ENCODE measurements at regions of chr13 and their contacts with region 1.

Region 1: DNA sequence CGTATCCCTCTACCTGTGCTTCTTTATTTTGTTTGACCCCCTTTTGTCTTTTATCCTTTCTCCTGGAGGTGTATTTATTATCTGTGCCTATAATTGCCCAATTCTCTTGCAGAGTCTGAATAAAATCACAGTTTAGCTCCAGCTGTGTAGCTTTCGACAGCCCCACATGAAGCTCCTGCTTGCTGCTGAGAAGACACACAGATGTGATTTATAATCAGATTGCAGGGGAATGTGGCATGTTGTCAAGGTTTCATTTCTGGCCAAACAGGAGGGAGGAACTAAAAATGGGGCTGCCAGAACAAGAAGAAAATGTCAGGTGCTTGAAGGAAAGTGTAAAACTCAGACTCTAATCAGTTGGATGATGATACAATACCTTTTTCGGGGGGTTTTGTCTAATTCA is 22.7 kb downstream of the CCNA1 start:
- DNase-seq: no peak
- H3K4me3 ChIP-seq: no peak overlapping the region
- H3K27ac ChIP-seq: no peak overlapping the region
- H3K4me1 ChIP-seq: no peaks in the 10 kb centered on the region
- H3K27me3 ChIP-seq: no peaks in the 10 kb centered on the region
- CTCF ChIP-seq: no peak
- POLR2A ChIP-seq: no peak

Region 2: DNA sequence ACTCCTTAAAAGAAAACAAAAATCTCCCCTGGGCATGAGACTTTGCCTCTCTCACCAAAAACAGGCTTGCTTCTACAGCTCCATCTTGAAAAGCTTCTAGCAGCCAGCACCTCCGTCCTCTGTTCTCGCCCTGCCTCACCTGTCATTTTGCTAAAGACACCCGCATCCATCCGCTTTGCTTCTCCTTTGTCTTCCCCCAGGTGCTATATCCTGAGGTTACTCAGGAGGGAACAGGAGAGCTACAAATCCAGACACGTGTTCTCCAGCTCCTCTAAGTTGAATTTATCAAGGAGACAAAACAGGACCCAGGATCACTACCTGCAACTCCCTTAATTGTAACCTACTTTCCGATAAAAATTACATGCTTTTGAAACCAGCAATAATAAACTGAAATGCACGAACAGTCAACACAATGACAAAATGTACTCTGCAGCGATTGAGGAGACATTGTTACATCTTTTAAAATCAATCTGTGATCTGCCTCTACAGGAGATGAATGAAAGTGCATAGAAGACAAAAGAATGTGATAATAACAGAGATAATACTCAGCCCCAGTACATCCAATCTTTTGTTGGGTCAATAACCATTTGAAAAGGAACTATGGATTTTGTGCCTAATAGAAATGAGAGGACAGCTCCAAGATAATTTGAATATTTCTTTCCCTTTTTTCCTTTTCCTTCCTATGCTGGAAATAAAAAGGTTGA is 545.0 kb before region 1 on chr13:
- intact Hi-C with region 1: no loop called
- DNase-seq: no peak
- H3K4me3 ChIP-seq: no peak overlapping the region
- H3K27ac ChIP-seq: no peak overlapping the region
- H3K4me1 ChIP-seq: no peaks in the 10 kb centered on the region
- H3K27me3 ChIP-seq: no peaks in the 10 kb centered on the region
- CTCF ChIP-seq: no peak
- POLR2A ChIP-seq: no peak

Region 3: DNA sequence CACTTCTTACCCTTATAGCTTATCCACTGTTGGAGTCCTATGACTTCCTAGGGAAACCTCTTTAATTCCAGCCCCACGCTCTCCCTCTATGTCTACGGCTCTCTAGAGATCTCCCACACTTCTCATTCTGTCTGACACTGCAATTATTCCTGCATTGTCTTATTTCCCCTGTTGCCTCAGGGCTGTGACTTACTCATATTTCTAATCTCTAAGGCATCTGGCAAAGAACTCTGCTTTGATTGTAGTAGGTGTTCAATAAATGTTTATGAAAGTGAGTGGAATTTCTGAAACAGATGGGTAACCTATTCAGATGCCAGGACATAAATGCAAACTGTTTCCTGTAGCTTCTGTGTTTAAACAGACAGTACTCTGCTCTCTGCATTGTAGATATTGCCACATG is 116.5 kb after region 1 on chr13:
- intact Hi-C with region 1: no loop called
- DNase-seq: no peak
- H3K4me3 ChIP-seq: no peak overlapping the region
- H3K27ac ChIP-seq: no peak overlapping the region
- H3K4me1 ChIP-seq: peaks cover 0 to 14% of the 10 kb centered on the region in 2 donors
- H3K27me3 ChIP-seq: no peaks in the 10 kb centered on the region
- CTCF ChIP-seq: no peak
- POLR2A ChIP-seq: no peak

Region 4: GRCh38 chr13:36736119-36736726 is 281.2 kb after region 1 on chr13:
- intact Hi-C with region 1: loop called (anchors 5 kb)
- DNase-seq: peak; percentile 49 to 63
- H3K4me3 ChIP-seq: no peak overlapping the region
- H3K27ac ChIP-seq: no peak overlapping the region
- H3K4me1 ChIP-seq: no peaks in the 10 kb centered on the region
- H3K27me3 ChIP-seq: no peaks in the 10 kb centered on the region
- CTCF ChIP-seq: peak; percentile 43 to 72 (median 66)
- POLR2A ChIP-seq: no peak

Region 5: DNA sequence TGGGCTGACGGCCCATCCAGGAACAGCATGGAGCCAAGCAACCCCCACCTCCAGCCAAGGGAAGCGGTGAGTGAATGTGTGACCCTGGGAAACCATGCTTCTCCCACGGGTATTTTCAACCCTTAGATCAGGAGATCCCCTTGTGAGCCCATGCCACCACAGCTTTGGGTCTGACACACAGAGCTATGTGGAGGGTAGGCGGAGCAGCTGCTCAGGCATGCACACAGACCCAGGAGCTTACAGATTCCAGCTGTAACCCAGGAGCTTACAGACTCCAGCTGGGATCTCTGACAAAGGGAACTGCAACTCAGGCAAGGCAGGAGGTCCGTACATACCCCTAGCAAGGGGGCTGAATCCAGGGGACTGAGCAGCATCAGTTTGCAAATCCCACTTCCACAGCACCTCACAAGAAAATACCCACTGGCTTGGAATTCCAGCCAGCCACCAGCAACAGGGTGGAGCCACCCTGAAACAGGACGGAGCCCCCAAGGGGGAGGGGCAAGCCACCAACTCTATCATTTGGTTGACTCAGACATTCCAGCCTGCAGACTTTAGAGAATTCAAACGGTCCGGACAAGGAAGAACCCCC is 323.2 kb after region 1 on chr13:
- intact Hi-C with region 1: no loop called
- DNase-seq: no peak
- H3K4me3 ChIP-seq: no peak overlapping the region
- H3K27ac ChIP-seq: no peak overlapping the region
- H3K4me1 ChIP-seq: no peaks in the 10 kb centered on the region
- H3K27me3 ChIP-seq: no peaks in the 10 kb centered on the region
- CTCF ChIP-seq: no peak
- POLR2A ChIP-seq: no peak